SK-N-SH (cell line): ENCODE measurements at regions of chr6 and their contacts with region 1.

Region 1: GRCh38 chr6:83708970-83709747 is at the start of gene SNAP91:
- DNase-seq: peak; percentile 95
- H3K4me3 ChIP-seq: peak within 1 kb of the TSS; percentile 60 to 61
- H3K27ac ChIP-seq: peak within 1 kb of the TSS in 1 of 2 experiments; percentile 87; a peak in 2 of 4 replicates
- H3K4me1 ChIP-seq: peaks cover 0 to 5% of the 10 kb centered on the region in 2 experiments; a peak in 2 of 4 replicates
- H3K27me3 ChIP-seq: peaks cover 30% of the 10 kb centered on the region; the same call in 1 of the 2 replicates
- CTCF ChIP-seq: no peak
- EP300 ChIP-seq: no peak
- RAD21 ChIP-seq: no peak
- polyA plus RNA-seq, gene SNAP91: 0.64 and 2.0 TPM in 2 replicates

Region 2: DNA sequence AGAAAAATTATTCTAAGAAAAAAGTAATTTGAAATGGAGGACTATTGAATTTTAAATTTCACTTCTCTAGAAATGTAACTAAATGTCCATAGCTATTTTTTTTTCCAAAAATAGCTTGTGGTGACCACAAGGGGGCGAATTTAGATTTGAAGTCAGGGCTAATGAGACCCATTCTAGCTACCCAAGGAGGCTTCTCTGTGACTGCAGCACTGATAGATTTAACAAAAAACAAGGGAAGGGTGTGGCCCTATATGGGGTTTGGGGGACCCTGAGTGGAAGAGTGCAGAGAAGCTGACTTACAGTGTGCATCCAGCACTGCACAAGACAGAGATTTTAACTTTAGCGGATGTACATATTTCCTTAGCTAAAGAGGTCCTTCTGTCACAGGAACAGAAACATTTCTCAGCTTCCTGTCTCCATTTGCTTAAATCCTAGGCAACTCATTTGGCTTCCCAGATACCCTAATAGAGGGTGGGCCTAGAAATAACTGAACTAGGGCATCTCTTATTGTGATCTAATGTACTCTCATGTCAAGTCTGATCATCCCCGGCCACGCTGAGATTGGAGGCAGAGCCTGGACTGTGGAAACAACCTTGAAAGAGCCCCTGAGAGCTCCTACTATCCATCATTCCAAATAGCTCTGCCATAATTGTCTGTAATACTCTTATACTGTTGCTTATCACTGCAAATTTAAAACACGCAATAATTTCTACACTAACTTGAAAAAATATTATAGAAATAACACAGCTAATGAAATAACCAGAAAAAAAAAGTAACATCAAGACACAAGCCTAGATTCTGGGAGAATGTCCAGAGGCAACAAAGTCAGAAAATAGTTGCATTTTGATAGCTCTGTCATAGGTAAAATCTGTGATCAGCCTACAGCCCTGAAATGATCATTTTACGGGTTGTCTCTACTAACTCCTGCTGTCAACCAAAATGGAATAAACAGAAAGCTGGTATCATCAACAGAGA is 93.8 kb before region 1 on chr6:
- CTCF ChIA-PET with region 1: interaction called, 7 read pairs
- POLR2A ChIA-PET with region 1: interaction called, 15 read pairs
- DNase-seq: peak; percentile 71
- H3K4me3 ChIP-seq: peak overlapping the region in 1 of 2 experiments; percentile 29; a peak in 3 of 4 replicates
- H3K27ac ChIP-seq: peak overlapping the region; percentile 29 to 100; a peak in 3 of 4 replicates
- H3K4me1 ChIP-seq: peaks cover 0 to 34% of the 10 kb centered on the region in 2 experiments; a peak in 2 of 4 replicates
- H3K27me3 ChIP-seq: no peaks in the 10 kb centered on the region
- CTCF ChIP-seq: peak; percentile 79
- EP300 ChIP-seq: peak in 1 of 2 experiments; percentile 91; a peak in 2 of 4 replicates
- RAD21 ChIP-seq: peak; percentile 67

Region 3: DNA sequence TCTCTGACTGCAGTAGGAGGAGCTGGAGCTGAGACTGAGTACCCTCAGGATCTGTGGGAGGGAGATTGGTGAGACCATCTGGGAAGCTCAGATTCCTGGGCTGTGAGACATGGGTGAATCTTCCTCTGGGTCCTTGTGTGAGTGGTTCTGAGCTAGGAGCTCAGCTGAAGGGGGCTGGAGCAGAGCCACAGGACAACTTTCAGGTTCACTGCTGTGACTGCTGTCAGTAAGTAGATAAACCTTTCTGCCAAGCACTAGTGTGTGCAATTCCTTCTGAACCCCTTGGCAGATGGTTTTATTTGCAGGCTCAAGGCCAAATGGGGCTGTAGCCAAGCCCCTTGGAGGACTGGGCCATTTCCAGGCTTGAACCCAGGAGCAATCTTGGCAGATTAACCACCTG is 49.4 kb after region 1 on chr6:
- CTCF ChIA-PET with region 1: no interaction called
- POLR2A ChIA-PET with region 1: no interaction called
- DNase-seq: no peak
- H3K4me3 ChIP-seq: no peak overlapping the region
- H3K27ac ChIP-seq: no peak overlapping the region
- H3K4me1 ChIP-seq: no peaks in the 10 kb centered on the region
- H3K27me3 ChIP-seq: no peaks in the 10 kb centered on the region
- CTCF ChIP-seq: no peak
- EP300 ChIP-seq: no peak
- RAD21 ChIP-seq: no peak